ENCODE measurements at regions of chr2 and their contacts with region 1.

Region 1: DNA sequence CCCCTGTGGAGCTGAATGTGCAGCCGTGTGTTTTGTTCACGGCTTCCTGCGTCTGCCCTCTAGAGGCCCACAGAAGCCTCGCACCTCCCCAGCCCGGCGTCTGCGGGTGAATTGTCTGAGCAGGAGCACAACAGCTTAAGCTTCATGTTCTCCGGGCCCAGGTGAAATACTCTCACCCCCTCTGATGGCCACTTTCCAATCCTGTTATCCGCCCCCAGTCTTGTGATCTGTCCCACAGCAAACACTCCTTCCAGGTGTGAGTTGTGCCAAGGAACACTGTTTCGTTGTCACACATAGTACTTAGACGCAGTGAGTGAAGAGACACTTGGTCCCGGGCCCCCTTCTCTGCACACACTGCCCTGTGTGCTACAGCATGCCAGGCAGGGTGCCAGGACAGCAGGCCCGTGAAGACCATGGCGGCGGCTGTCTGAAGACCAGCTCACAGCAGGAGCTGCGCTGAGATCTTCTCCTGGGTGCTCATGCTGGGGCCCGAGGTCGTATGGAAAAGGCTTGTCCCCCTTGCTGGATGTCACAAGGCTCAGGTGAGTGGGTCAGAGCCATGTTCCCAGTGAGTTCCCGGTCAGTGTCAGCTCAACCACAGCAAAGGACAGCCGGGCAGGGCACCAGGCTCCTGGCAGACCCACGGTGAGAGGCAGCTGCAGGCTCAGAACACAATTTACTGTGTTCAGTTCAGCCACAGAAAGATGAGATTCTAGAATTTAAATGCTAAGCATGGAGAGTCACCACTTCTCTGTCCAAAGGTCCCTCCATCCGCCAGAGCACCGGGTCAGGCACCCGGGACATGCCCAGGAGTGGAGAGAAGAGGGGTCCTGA is 6.8 kb upstream of the PXDN start:
- DNase-seq: no peak
- H3K4me3 ChIP-seq: no peak overlapping the region
- H3K27me3 ChIP-seq: no peaks in the 10 kb centered on the region
- CTCF ChIP-seq: peak; percentile 98

Region 2: GRCh38 chr2:1675633-1676032 is 75.5 kb before region 1 on chr2:
- CTCF ChIA-PET with region 1: interaction called, 12 read pairs
- POLR2A ChIA-PET with region 1: no interaction called
- DNase-seq: peak; percentile 87
- H3K4me3 ChIP-seq: no peak overlapping the region
- H3K27me3 ChIP-seq: no peaks in the 10 kb centered on the region
- CTCF ChIP-seq: peak; percentile 80

Region 3: GRCh38 chr2:1730015-1730927 is 20.9 kb before region 1 on chr2:
- CTCF ChIA-PET with region 1: interaction called, 10 read pairs
- POLR2A ChIA-PET with region 1: interaction called, 3 read pairs
- DNase-seq: peak; percentile 83
- H3K4me3 ChIP-seq: no peak overlapping the region
- H3K27me3 ChIP-seq: no peaks in the 10 kb centered on the region
- CTCF ChIP-seq: no peak

Region 4: GRCh38 chr2:1781271-1782080 is 30.3 kb after region 1 on chr2:
- CTCF ChIA-PET with region 1: interaction called, 10 read pairs
- POLR2A ChIA-PET with region 1: no interaction called
- DNase-seq: no peak
- H3K4me3 ChIP-seq: no peak overlapping the region
- H3K27me3 ChIP-seq: peaks cover 3% of the 10 kb centered on the region; the same call in 1 of the 2 replicates
- CTCF ChIP-seq: no peak